ENCODE measurements at regions of chr15 and their contacts with region 1.

Region 1: DNA sequence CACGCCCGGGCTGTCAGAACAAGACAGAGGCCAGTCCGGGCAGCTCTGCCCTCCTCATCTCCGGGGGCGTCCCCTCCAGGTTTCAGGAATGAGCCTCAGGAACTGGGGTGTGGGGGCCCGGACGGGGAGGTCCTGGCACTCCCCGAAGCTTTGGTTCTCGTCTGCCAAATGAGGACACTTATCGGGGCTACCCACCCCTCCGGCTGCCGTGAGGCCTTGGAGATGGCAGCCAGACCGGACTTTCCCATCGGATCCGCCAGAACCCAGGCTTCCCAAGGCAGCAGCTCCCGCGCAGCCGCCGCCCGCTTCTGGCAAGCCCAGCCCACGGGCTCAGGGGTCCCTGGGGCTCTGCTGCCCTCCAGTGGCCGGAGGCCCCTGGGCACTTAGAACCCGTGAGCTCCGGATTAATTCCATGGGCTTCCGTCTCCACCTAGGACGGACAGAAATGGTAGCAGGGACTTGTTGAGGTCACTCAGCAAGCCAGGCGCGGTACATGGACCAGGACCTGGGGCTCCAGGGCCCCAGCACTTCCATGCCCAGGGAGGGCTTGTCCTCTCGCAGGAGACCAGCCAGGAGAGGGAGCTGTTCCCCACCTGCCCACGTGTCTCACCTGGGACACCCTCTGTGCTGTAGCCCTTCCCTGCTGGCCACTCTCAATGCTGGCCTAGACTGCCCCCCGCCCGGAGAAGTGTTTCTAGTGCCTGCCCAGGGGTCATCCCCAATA is 89.4 kb downstream of the LINGO1 start:
- H3K4me3 ChIP-seq: peak overlapping the region; percentile 44
- H3K27ac ChIP-seq: peak overlapping the region; percentile 54; the same call in 1 of the 2 replicates
- H3K4me1 ChIP-seq: no peaks in the 10 kb centered on the region
- CTCF ChIP-seq: peak; percentile 99

Region 2: GRCh38 chr15:77107531-77108355 is 435.6 kb before region 1 on chr15:
- CTCF ChIA-PET with region 1: interaction called, 55 read pairs
- POLR2A ChIA-PET with region 1: interaction called, 4 read pairs
- H3K4me3 ChIP-seq: no peak overlapping the region
- H3K27ac ChIP-seq: no peak overlapping the region
- H3K4me1 ChIP-seq: no peaks in the 10 kb centered on the region
- CTCF ChIP-seq: peak; percentile 70

Region 3: GRCh38 chr15:77126529-77127326 is 416.6 kb before region 1 on chr15:
- CTCF ChIA-PET with region 1: interaction called, 131 read pairs
- POLR2A ChIA-PET with region 1: no interaction called
- H3K4me3 ChIP-seq: no peak overlapping the region
- H3K27ac ChIP-seq: no peak overlapping the region
- H3K4me1 ChIP-seq: no peaks in the 10 kb centered on the region
- CTCF ChIP-seq: no peak

Region 4: DNA sequence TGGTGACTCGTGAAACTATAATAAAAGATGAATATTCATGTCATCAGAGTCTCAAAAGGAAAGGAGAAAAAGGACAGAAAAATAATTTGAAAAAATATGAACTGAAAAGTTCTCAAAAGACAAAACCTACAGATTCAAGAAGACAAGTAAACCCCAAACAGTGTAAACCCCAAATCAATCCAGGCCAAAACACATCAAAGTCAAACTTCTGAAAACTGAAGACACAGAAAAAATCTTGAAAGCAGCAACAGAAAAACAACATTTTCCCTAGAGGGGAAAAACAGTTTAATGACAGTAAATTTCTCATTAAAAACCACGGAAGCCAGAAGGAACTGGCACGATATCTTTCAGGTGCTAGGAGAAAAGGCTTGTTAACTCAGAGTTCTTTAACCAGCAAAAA is 267.2 kb before region 1 on chr15:
- CTCF ChIA-PET with region 1: no interaction called
- POLR2A ChIA-PET with region 1: no interaction called
- H3K4me3 ChIP-seq: no peak overlapping the region
- H3K27ac ChIP-seq: no peak overlapping the region
- H3K4me1 ChIP-seq: no peaks in the 10 kb centered on the region
- CTCF ChIP-seq: no peak

Region 5: GRCh38 chr15:77419836-77420609 is 123.3 kb before region 1 on chr15 and contains the start of gene PEAK1:
- CTCF ChIA-PET with region 1: interaction called, 12 read pairs
- POLR2A ChIA-PET with region 1: interaction called, 4 read pairs
- H3K4me3 ChIP-seq: peak within 1 kb of the TSS; percentile 73
- H3K27ac ChIP-seq: peak within 1 kb of the TSS; percentile 86
- H3K4me1 ChIP-seq: peaks cover 32% of the 10 kb centered on the region
- CTCF ChIP-seq: no peak

Region 6: DNA sequence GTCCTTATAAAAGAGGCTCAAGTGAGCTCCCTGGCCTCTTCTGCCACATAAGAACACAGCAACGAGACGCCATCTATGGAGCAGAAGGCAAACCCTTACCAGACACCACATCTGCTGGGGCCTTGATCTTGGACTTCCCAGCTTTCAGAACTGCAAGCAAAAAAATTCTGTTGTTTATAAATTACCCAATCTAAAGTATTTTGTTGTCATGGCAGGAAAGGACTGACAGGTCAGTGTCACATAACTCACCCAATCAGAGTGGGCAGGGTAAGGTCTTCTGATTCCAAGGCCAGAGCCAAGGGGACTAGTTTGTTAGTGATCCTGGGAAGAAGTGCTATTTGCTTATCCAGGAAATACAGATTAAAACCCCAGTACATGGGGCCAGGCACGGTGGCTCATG is 23.8 kb before region 1 on chr15:
- CTCF ChIA-PET with region 1: interaction called, 12 read pairs
- POLR2A ChIA-PET with region 1: no interaction called
- H3K4me3 ChIP-seq: no peak overlapping the region
- H3K27ac ChIP-seq: no peak overlapping the region
- H3K4me1 ChIP-seq: no peaks in the 10 kb centered on the region
- CTCF ChIP-seq: no peak

Region 7: DNA sequence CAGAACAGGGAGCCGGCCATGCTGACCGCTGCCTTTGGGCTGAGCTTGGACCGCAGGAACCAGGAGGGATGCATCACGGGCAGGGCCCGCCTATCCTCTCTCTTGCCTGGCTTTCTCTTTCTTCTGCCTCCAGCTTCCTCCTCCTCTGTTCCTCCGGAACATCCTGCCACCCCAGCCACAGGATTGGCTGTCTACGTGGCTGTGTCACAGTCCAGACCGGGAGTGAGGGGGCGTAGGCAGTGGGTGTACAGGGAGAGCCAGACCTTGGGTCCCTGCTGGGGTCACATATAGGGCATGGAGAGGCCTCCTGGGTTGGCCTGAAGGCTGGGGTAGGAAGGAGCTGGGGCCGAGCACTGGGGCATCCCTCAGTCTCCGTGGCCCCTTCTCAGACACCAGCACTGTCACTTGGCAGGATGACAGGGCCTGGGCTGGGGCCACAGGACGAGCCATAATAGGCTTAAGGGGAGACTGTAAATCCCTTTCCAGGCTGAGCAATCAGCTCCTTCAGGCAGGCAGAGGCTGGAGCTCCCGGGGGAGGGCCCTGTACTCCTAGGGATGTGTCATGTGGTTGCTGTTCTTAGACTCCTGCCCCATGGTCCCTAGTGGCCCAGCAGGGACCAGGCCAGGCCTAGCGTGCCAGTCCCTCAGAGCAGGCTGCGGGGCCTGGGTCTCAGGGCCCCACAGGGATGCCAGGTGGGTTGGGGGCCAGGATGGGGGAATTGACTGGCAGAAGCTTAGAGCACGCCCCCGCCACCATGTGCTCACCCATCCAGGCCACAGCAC is 64.0 kb after region 1 on chr15:
- CTCF ChIA-PET with region 1: interaction called, 13 read pairs
- POLR2A ChIA-PET with region 1: interaction called, 3 read pairs
- H3K4me3 ChIP-seq: no peak overlapping the region
- H3K27ac ChIP-seq: no peak overlapping the region; the same call in 1 of the 2 replicates
- H3K4me1 ChIP-seq: peaks cover 6% of the 10 kb centered on the region; the same call in 1 of the 2 replicates
- CTCF ChIP-seq: 0 out of 2 replicates have a peak, but pooled peaks have one; percentile 8

Region 8: DNA sequence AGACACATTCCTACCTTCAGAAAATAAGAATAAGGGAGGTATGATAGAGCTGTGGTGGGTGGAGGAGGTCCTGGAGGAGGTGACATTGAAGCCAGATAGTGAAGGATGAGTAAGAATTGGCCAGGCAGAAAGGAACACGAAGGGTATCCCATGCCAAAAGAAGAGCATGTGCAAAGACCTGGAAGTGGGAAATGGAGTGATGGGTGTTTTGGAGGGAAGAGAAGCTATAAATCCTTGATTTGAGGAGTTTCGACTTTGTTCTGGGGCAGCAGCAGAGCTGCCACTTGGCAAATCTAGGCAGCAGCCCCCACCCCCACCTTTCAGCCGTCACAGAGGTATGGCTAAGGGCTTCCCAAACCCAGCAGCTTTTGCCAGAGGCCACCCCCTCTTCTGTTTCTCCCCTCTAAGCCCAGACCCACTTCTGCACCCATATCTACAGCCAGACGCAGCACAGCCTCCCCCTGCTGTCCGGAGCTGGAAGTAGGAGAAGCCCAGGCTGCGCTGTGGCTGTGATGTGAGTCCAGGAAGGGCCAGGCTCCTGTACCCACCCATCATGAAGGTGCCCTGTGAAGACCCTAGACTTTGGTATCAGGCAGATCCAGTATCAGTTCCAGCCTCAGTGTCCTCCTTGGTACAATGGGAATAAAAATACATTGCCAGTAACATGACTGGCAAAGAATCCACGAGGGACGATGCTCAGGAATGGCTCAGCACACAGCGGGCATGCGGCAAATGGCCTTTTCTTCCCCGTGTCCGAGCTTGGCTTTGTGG is 278.1 kb after region 1 on chr15:
- CTCF ChIA-PET with region 1: interaction called, 12 read pairs
- POLR2A ChIA-PET with region 1: no interaction called
- H3K4me3 ChIP-seq: no peak overlapping the region
- H3K27ac ChIP-seq: no peak overlapping the region
- H3K4me1 ChIP-seq: no peaks in the 10 kb centered on the region
- CTCF ChIP-seq: peak; percentile 78

Region 9: GRCh38 chr15:77889009-77889806 is 345.9 kb after region 1 on chr15:
- CTCF ChIA-PET with region 1: no interaction called
- POLR2A ChIA-PET with region 1: no interaction called
- H3K4me3 ChIP-seq: no peak overlapping the region
- H3K27ac ChIP-seq: no peak overlapping the region
- H3K4me1 ChIP-seq: no peaks in the 10 kb centered on the region
- CTCF ChIP-seq: no peak

Measured in HEK293 (cell line).